Activated T-helper 2 cell treated with anti-CD3 and anti-CD28 coated beads, Interferon-gamma antibody, Interleukin-2, Interleukin-4, amounts not matched to agents 10 μg/mL and 5 μg/mL and 100 μg/mL, durations not matched to agents 14 hours and 24 hours and 36 hours (primary cell): ENCODE measurements at regions of chr3 and their contacts with region 1.

Region 1: GRCh38 chr3:49529567-49529966 is 24.7 kb upstream of the BSN start:
- DNase-seq: no peak
- H3K4me3 Mint-ChIP-seq: no peak overlapping the region
- H3K27ac Mint-ChIP-seq: peak overlapping the region; percentile 55
- H3K4me1 Mint-ChIP-seq: peaks cover 18% of the 10 kb centered on the region
- H3K27me3 Mint-ChIP-seq: no peaks in the 10 kb centered on the region

Region 2: GRCh38 chr3:49469936-49470713 is 59.4 kb before region 1 on chr3 and contains the start of gene DAG1:
- intact Hi-C with region 1: loop called (anchors 2 kb)
- DNase-seq: peak; percentile 94
- H3K4me3 Mint-ChIP-seq: peak within 1 kb of the TSS; percentile 87
- H3K27ac Mint-ChIP-seq: peak within 1 kb of the TSS; percentile 84
- H3K4me1 Mint-ChIP-seq: peaks cover 18% of the 10 kb centered on the region
- H3K27me3 Mint-ChIP-seq: no peaks in the 10 kb centered on the region
- total RNA-seq, gene DAG1: 17.0 and 25.9 TPM in 2 replicates

Region 3: GRCh38 chr3:49636883-49637609 is 107.5 kb after region 1 on chr3:
- intact Hi-C with region 1: no loop called
- DNase-seq: no peak
- H3K4me3 Mint-ChIP-seq: no peak overlapping the region
- H3K27ac Mint-ChIP-seq: peak overlapping the region; percentile 18
- H3K4me1 Mint-ChIP-seq: no peaks in the 10 kb centered on the region
- H3K27me3 Mint-ChIP-seq: no peaks in the 10 kb centered on the region